ENCODE measurements at regions of chr19 and their contacts with region 1.

Region 1: DNA sequence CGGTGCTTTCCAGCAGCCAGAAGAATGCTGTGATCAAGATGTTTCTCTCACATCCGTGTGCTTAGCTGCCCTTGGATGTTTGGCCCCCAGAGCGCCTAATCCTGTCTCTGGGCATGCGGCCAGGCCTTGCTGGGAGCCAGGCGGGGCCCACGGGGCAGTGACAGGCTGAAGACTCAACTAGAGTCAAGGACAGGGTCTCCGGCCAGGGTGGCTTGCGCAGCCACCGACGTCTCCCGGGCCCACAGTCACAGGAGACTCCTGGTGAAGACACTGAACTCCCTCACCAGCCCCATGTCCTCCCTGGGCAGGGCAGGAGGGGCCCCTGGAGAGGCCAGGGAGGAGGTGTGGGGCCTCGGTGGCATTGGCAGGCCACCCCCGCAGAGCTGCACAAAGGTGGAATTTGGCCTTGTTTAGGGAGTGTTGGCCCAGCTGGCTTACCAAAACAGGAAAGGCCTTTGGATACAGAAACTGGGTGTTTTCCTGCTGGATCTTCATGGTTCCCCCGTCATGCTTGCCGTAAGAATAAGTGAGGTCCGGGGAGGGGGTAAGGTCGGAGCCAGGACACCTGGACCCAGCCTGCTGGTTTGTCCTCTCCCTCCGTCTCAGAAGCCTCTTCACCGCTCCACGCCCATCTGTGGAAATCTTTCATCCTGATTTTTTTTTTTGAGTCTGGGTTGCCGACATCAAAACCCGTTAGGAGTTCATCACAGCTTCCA is 10.0 kb upstream of the NDUFS7 start:
- DNase-seq: no peak
- ATAC-seq: no peak
- H3K4me3 ChIP-seq: no peak overlapping the region
- H3K27ac ChIP-seq: no peak overlapping the region
- H3K4me1 ChIP-seq: no peaks in the 10 kb centered on the region
- H3K27me3 ChIP-seq: no peaks in the 10 kb centered on the region
- CTCF ChIP-seq: no peak

Region 2: GRCh38 chr19:1275260-1275975 is 98.3 kb before region 1 on chr19 and contains the start of gene FAM174C:
- CTCF ChIA-PET with region 1: no interaction called
- POLR2A ChIA-PET with region 1: interaction called, 4 read pairs
- in situ Hi-C with region 1: no loop called
- intact Hi-C with region 1: loop called (anchors 10 kb)
- DNase-seq: no peak
- ATAC-seq: peak; percentile 87
- H3K4me3 ChIP-seq: peak within 1 kb of the TSS; percentile 62 to 64
- H3K27ac ChIP-seq: peak within 1 kb of the TSS; percentile 93
- H3K4me1 ChIP-seq: peaks cover 25% of the 10 kb centered on the region
- H3K27me3 ChIP-seq: no peaks in the 10 kb centered on the region
- CTCF ChIP-seq: no peak
- total RNA-seq, gene FAM174C: 133 TPM